ENCODE measurements at regions of chr12 and their contacts with region 1.

Region 1: GRCh38 chr12:14167005-14167628 is 185.7 kb upstream of the GRIN2B start:
- DNase-seq: peak; percentile 67
- H3K4me3 ChIP-seq: no peak overlapping the region
- H3K27ac ChIP-seq: no peak overlapping the region
- H3K4me1 ChIP-seq: no peaks in the 10 kb centered on the region
- H3K27me3 ChIP-seq: no peaks in the 10 kb centered on the region; the same call in 1 of the 2 replicates
- CTCF ChIP-seq: peak; percentile 95
- EP300 ChIP-seq: no peak
- RAD21 ChIP-seq: peak; percentile 92

Region 2: DNA sequence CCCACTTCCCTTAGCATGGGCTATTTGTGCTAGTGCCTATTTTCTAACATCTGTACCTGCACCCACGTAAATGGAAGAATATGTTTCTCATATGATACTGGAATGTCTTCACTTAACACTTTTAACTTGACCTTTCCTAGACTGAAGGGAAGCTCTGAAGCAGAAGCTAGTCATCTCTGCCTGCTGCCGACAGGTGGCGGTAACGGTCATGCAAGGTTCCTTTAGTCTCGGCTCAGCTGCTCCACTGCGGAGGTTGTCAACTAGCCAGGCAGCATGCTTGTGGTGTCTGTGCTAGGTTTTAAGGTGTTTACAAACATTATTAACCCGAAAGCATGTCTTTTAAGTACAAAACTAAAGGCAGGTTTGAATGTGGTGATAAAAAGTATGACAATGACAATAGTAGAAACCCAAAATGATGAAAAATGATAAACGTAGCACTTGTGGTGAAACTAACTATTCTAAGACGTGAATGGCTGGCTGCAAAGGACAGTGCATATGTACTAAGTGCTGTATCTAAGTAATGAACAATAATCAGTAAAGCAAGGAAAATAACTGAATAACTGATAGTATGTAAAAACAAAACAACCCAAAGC is 302.9 kb before region 1 on chr12:
- CTCF ChIA-PET with region 1: interaction called, 35 read pairs
- POLR2A ChIA-PET with region 1: no interaction called
- DNase-seq: peak; percentile 46
- H3K4me3 ChIP-seq: no peak overlapping the region; a peak in 1 of 4 replicates
- H3K27ac ChIP-seq: no peak overlapping the region
- H3K4me1 ChIP-seq: no peaks in the 10 kb centered on the region
- H3K27me3 ChIP-seq: peaks cover 12% of the 10 kb centered on the region
- CTCF ChIP-seq: peak; percentile 95
- EP300 ChIP-seq: no peak
- RAD21 ChIP-seq: peak; percentile 65

Region 3: GRCh38 chr12:14185427-14186192 is 18.5 kb after region 1 on chr12:
- CTCF ChIA-PET with region 1: interaction called, 12 read pairs
- POLR2A ChIA-PET with region 1: no interaction called
- DNase-seq: peak; percentile 37
- H3K4me3 ChIP-seq: peak overlapping the region in 1 of 2 experiments; percentile 8; a peak in 1 of 4 replicates
- H3K27ac ChIP-seq: no peak overlapping the region
- H3K4me1 ChIP-seq: no peaks in the 10 kb centered on the region
- H3K27me3 ChIP-seq: no peaks in the 10 kb centered on the region
- CTCF ChIP-seq: peak; percentile 75
- EP300 ChIP-seq: no peak
- RAD21 ChIP-seq: peak; percentile 66

Measured in SK-N-SH (cell line).